ENCODE measurements at regions of chr1 and their contacts with region 1.

Region 1: DNA sequence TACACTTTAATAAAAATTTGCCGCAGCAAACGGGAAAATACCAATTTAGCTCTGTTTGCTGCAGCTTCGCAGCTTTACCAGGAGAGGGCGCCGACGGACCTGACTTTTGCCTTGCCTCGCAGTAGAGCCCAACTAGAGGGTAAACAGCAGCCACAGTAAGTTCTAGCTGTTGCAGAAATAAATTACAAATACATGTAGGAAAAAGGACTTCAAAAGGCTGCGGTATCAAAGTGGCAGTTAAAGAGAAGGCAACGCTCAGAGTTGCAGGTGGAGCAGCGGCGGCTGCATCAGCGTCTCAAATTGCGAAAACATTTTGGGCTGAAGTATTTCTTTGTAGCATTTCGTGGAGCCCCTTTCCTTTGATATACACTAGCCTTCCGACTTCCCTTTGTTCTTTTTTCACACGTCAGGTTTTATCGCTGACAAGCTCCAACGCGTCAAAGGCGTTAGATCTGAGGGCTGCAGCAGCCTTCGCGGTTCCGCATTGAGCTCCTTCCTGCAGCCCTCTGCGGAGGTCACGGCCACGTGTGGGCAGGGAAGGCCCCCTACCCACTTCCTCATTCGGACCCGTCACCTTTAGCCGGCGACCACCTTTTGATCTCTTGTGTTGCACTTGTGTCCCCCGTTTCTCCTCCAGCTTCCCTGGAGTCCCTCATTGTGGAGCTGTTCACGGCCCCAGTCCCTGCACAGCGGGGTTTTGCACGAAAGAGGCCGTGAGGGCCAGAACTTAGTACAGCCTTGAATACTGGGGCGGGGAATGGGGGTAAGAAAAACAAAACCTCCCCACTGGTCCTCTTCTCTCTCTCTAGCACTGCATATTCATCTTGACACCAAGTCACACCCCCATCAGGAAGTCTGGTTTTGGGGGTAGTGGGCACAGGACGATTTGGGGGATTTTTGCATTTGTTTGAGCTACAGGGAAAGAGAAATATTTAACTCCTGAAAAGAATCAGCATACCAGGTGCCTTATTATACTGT is 72.8 kb downstream of the S1PR1 start:
- DNase-seq: peak; percentile 18
- ATAC-seq: no peak
- H3K4me3 ChIP-seq: no peak overlapping the region
- H3K27ac ChIP-seq: no peak overlapping the region
- H3K4me1 ChIP-seq: no peaks in the 10 kb centered on the region; the same call in 1 of the 2 replicates
- H3K27me3 ChIP-seq: no peaks in the 10 kb centered on the region
- CTCF ChIP-seq: peak; percentile 88

Region 2: DNA sequence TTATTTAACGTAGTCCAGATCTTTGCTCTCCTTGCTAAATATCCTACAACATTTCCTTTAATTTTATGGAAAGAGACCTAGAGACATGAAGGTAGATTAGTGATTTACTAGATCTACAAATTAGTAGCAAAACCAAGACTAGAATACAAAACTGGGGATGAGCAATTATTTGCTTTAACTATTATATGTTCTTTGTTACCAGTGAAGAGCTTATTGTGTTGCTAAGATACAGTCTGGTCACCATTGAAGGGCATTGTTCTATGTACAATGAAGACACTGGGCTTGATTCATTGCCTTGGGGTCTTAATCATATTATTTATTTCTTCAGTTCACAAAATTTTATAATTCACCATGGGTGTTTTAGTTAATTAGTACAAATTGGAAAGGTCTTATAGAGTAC is 15.5 kb after region 1 on chr1:
- CTCF ChIA-PET with region 1: no interaction called
- POLR2A ChIA-PET with region 1: no interaction called
- in situ Hi-C with region 1: no loop called
- intact Hi-C with region 1: no loop called
- DNase-seq: no peak
- ATAC-seq: no peak
- H3K4me3 ChIP-seq: no peak overlapping the region
- H3K27ac ChIP-seq: no peak overlapping the region
- H3K4me1 ChIP-seq: no peaks in the 10 kb centered on the region
- H3K27me3 ChIP-seq: no peaks in the 10 kb centered on the region
- CTCF ChIP-seq: no peak

Region 3: DNA sequence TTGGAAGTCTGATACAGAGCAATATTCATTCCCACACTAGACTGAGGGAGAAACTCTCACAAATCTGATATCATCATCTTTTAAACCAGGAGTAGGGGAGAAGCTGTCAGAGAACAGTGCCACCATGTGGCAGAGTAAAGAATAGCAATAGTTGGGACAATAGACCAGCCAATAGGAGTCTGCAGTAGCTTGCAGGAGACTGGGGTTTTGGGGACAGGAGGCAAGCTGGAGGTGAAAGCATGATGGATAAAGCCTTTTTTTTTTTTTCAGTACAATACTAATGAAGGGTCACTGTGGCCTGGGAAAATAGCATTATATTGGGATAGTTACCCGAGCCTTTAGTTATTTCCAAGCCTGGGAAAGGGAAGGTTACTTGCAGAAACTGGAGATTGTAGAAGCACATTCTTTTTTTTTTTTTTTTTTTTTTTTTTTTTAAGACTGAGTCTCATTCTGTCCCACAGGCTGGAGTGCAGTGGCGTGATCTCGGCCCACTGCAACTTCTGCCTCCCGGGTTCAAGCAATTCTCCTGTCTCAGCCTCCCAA is 47.9 kb after region 1 on chr1:
- CTCF ChIA-PET with region 1: interaction called, 23 read pairs
- POLR2A ChIA-PET with region 1: no interaction called
- in situ Hi-C with region 1: no loop called
- intact Hi-C with region 1: loop called (anchors 1 kb)
- DNase-seq: peak; percentile 28
- ATAC-seq: peak; percentile 89
- H3K4me3 ChIP-seq: no peak overlapping the region
- H3K27ac ChIP-seq: no peak overlapping the region
- H3K4me1 ChIP-seq: no peaks in the 10 kb centered on the region
- H3K27me3 ChIP-seq: no peaks in the 10 kb centered on the region
- CTCF ChIP-seq: peak; percentile 79

Region 4: GRCh38 chr1:102186536-102186935 is 876.9 kb after region 1 on chr1:
- CTCF ChIA-PET with region 1: no interaction called
- POLR2A ChIA-PET with region 1: no interaction called
- in situ Hi-C with region 1: no loop called
- intact Hi-C with region 1: loop called (anchors 10 kb)
- DNase-seq: no peak
- ATAC-seq: no peak
- H3K4me3 ChIP-seq: no peak overlapping the region
- H3K27ac ChIP-seq: no peak overlapping the region
- H3K4me1 ChIP-seq: no peaks in the 10 kb centered on the region
- H3K27me3 ChIP-seq: no peaks in the 10 kb centered on the region
- CTCF ChIP-seq: no peak